Activated B cell treated with CpG ODN at 0.5 μM for 24 hours (primary cell): ENCODE measurements at regions of chr1 and their contacts with region 1.

Region 1: DNA sequence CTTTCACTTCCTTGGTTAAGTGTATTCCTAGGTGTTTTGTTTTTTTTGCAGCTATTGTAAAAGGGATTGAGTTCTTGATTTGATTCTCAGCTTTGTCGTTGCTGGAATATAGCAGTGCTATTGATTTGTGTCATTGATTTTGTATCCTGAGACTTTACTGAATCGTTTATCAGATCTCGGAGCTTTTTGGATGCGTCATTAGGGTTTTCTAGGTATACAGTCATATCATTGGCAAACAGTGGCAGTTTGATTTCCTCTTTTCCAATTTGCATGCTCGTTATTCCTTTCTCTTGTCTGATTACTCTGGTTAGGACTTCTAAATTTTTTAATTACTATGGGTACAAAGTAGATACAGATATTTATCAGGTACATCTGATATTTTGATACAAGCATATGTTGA is 75.4 kb downstream of the SLC35A3 start:
- DNase-seq: no peak
- ATAC-seq: no peak
- H3K4me3 Mint-ChIP-seq: peak overlapping the region; percentile 47
- H3K27ac Mint-ChIP-seq: peak overlapping the region; percentile 73
- H3K4me1 Mint-ChIP-seq: peaks cover 88% of the 10 kb centered on the region
- H3K27me3 Mint-ChIP-seq: no peaks in the 10 kb centered on the region
- CTCF ChIP-seq: no peak

Region 2: DNA sequence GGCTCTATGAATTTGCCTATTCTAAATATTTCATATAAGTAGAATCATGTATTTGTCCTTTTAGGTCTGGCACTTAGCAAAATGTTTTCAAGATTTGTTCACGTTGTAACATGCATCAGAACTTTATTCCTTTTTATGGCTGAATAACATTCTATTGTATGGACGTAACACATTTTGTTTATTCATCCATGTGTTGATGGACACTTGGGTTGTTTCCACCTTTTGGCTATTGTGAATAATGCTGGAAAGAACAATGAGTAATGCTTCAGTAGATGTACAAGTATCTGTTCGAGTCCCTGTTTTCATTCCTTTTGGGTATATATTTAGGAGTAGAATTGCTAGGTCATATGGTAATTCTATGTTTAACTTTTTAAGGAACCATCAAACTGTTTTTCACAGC is 50.7 kb before region 1 on chr1:
- CTCF ChIA-PET with region 1: no interaction called
- POLR2A ChIA-PET with region 1: no interaction called
- intact Hi-C with region 1: no loop called
- DNase-seq: no peak
- ATAC-seq: no peak
- H3K4me3 Mint-ChIP-seq: no peak overlapping the region
- H3K27ac Mint-ChIP-seq: no peak overlapping the region
- H3K4me1 Mint-ChIP-seq: no peaks in the 10 kb centered on the region
- H3K27me3 Mint-ChIP-seq: no peaks in the 10 kb centered on the region
- CTCF ChIP-seq: no peak

Region 3: GRCh38 chr1:100080331-100080730 is 35.1 kb after region 1 on chr1:
- CTCF ChIA-PET with region 1: no interaction called
- POLR2A ChIA-PET with region 1: no interaction called
- intact Hi-C with region 1: loop called (anchors 5 kb)
- DNase-seq: no peak
- ATAC-seq: no peak
- H3K4me3 Mint-ChIP-seq: no peak overlapping the region
- H3K27ac Mint-ChIP-seq: no peak overlapping the region
- H3K4me1 Mint-ChIP-seq: peaks cover 4% of the 10 kb centered on the region
- H3K27me3 Mint-ChIP-seq: no peaks in the 10 kb centered on the region
- CTCF ChIP-seq: no peak